GM12878 (cell line): ENCODE measurements at regions of chr6 and their contacts with region 1.

Region 1: DNA sequence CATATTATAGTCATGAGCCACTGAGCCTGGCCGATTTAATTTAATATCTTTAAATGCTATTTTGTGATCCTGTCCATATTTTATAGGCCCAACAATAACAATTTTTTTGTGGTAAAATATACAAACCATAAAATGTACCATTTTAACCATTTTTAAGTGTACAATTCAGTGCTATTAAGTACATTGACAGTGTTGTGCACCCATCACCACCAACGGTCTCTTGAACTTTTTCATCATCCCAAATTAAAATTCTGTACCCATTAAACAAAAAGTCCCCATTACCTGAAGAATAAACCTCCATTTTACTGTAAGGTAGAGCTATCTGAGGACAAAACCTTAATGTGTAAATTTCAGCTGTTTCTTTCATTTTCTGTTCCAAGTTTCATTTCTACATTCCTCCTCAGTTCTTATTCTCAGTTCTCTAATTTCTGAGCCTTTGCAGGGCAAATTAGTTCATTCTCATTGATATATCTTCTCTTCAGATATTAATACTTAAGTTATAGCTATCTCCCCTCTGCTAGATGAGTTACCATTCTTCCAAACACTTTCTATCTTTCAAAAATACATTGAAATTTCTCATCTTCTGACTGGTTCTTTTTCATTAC is 10.3 kb downstream of the MTO1 start:
- DNase-seq: peak; percentile 58
- ATAC-seq: peak; percentile 98
- H3K4me3 ChIP-seq: peak overlapping the region; percentile 48; the same call in 1 of the 2 replicates
- H3K27ac ChIP-seq: peak overlapping the region; percentile 90
- H3K4me1 ChIP-seq: peaks cover 15% of the 10 kb centered on the region
- H3K27me3 ChIP-seq: no peaks in the 10 kb centered on the region
- CTCF ChIP-seq: no peak
- EP300 ChIP-seq: peak; percentile 43 to 89; a peak in 3 of 4 replicates
- POLR2A ChIP-seq: no peak
- RAD21 ChIP-seq: no peak

Region 2: DNA sequence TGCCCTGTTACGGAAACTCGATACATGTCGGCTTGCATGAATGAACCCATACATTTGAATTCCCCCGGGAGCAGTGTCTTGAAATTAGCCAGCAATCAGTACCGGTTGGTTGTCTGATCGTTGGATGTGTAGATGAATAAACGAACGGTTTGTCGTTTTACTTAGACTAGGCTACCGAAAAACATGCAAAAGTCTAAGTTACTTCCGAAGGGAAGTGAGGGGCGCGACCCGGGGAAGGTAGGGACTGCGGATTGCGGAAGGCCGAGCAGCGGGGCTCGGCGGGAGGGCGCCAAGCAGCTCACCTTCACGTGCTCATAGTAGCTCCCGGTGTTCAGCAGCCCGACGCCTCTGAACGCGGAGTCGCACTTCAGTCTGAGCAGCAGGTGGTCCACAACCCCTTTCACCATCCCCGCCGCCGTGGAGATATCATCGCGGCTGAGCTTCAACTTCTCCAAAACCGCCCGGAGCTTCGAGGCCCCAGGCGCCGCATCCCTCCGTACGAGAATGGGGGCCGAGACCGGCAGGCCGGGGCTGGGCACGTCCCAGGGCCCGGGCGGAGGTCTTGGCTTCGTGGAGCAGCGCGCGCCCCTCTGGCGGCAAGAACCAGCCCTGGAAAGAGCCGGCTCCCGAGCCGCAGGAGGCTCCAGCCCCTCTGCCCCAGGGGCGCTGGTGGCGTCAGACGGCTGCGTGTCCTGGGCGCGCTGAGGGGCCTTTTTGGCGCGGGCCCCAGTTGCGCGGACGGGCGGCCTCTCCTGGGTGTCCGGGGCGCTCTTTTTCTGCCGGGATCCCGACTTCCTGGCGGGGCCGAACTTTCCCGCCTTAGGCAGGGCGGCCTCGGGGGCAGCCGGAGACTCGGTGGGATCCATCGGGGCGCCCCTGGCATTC is 20.3 kb before region 1 on chr6:
- CTCF ChIA-PET with region 1: interaction called, 15 read pairs
- POLR2A ChIA-PET with region 1: interaction called, 21 read pairs
- RAD21 ChIA-PET with region 1: interaction called, 21 read pairs
- SMC1A ChIA-PET with region 1: interaction called, 16 read pairs
- in situ Hi-C with region 1: no loop called
- intact Hi-C with region 1: no loop called
- DNase-seq: no peak
- ATAC-seq: peak; percentile 72
- H3K4me3 ChIP-seq: peak overlapping the region; percentile 91
- H3K27ac ChIP-seq: peak overlapping the region; percentile 95
- H3K4me1 ChIP-seq: 0 out of 2 replicates have a peak, but pooled peaks cover 3% of the 10 kb centered on the region
- H3K27me3 ChIP-seq: no peaks in the 10 kb centered on the region
- CTCF ChIP-seq: no peak
- EP300 ChIP-seq: no peak
- POLR2A ChIP-seq: peak; percentile 84
- RAD21 ChIP-seq: no peak

Region 3: DNA sequence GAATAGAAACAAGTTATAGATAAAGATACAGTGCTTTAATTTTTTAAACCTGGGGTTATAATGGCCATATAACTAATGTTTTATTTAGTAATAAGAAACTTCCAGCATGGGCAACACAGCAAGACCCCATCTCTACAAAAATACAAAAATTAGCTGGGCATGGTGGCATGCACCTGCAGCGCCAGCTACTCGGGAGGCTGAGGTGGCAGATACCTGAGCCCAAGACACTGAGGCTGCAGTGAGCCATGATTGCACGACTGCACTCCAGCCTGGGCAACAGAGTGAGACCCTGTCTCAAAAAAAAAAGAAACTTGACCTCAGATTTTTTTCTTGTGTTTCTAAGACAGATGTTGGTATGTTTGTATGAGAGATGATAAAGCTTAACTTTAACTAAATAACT is 26.1 kb after region 1 on chr6:
- CTCF ChIA-PET with region 1: interaction called, 3 read pairs
- POLR2A ChIA-PET with region 1: interaction called, 5 read pairs
- RAD21 ChIA-PET with region 1: interaction called, 3 read pairs
- SMC1A ChIA-PET with region 1: interaction called, 12 read pairs
- in situ Hi-C with region 1: no loop called
- intact Hi-C with region 1: no loop called
- DNase-seq: no peak
- ATAC-seq: no peak
- H3K4me3 ChIP-seq: no peak overlapping the region
- H3K27ac ChIP-seq: no peak overlapping the region
- H3K4me1 ChIP-seq: no peaks in the 10 kb centered on the region
- H3K27me3 ChIP-seq: no peaks in the 10 kb centered on the region
- CTCF ChIP-seq: no peak
- EP300 ChIP-seq: no peak
- POLR2A ChIP-seq: no peak
- RAD21 ChIP-seq: no peak

Region 4: DNA sequence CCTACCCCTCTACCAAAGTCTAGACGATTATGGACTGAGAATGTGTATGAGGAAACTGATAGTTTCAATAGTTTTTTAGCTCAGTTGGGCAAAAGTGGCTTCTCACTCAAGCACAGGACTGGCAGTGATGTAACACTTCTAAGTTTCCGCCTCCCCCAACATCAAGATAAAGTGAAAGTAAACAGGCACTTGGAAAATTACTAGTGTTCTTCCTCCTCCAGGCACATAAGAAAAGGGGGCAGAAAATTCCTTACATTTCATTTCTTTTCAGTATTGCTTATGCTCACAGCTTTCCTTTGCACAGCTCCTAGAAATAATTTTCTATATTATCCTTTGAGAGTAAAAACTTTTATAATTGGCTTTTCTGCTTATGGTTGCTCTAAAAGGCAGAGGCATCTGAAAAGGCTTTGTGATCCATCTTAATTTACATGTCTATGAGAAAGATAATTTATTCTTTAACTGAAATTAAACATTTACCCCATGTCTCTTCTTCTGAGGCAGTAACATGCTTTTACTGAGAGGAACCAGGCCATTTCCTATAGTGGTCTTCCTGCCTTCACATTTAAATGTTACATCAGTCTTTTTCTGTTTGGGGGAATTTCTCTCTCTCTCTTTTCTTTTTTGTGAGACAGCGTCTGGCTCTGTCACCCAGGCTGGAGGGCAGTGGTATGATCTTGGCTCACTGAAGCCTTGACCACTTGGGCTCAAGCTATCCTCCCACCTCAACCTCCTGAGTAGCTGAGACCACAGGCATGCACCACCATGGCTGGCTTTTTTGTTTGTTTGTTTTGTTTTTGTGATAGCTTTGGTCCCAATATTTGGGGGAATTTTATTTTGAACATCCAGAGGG is 114.0 kb after region 1 on chr6:
- CTCF ChIA-PET with region 1: no interaction called
- POLR2A ChIA-PET with region 1: interaction called, 11 read pairs
- RAD21 ChIA-PET with region 1: interaction called, 8 read pairs
- SMC1A ChIA-PET with region 1: interaction called, 7 read pairs
- in situ Hi-C with region 1: no loop called
- intact Hi-C with region 1: no loop called
- DNase-seq: peak; percentile 66
- ATAC-seq: peak; percentile 87
- H3K4me3 ChIP-seq: peak overlapping the region; percentile 29
- H3K27ac ChIP-seq: peak overlapping the region; percentile 95
- H3K4me1 ChIP-seq: peaks cover 18% of the 10 kb centered on the region
- H3K27me3 ChIP-seq: no peaks in the 10 kb centered on the region
- CTCF ChIP-seq: no peak
- EP300 ChIP-seq: peak in 1 of 2 experiments; percentile 39; a peak in 1 of 4 replicates
- POLR2A ChIP-seq: no peak
- RAD21 ChIP-seq: no peak